ENCODE measurements at regions of chr15 and their contacts with region 1.

Region 1: GRCh38 chr15:39580117-39580484 is 778 bp upstream of the THBS1 start:
- DNase-seq: peak; percentile 95
- ATAC-seq: peak; percentile 38
- H3K4me3 Mint-ChIP-seq: peak overlapping the region; percentile 87
- H3K27ac Mint-ChIP-seq: peak overlapping the region; percentile 99
- H3K4me1 Mint-ChIP-seq: peaks cover 28% of the 10 kb centered on the region
- H3K27me3 Mint-ChIP-seq: peaks cover 16% of the 10 kb centered on the region
- CTCF ChIP-seq: peak; percentile 94

Region 2: GRCh38 chr15:38873167-38873566 is 706.9 kb before region 1 on chr15:
- CTCF ChIA-PET with region 1: interaction called, 13 read pairs
- POLR2A ChIA-PET with region 1: interaction called, 3 read pairs
- DNase-seq: peak; percentile 16
- ATAC-seq: peak; percentile 79
- H3K4me3 Mint-ChIP-seq: no peak overlapping the region
- H3K27ac Mint-ChIP-seq: no peak overlapping the region
- H3K4me1 Mint-ChIP-seq: peaks cover 16% of the 10 kb centered on the region
- H3K27me3 Mint-ChIP-seq: no peaks in the 10 kb centered on the region
- CTCF ChIP-seq: no peak

Region 3: GRCh38 chr15:39171944-39172368 is 408.1 kb before region 1 on chr15:
- CTCF ChIA-PET with region 1: interaction called, 44 read pairs
- POLR2A ChIA-PET with region 1: interaction called, 24 read pairs
- DNase-seq: peak; percentile 63
- ATAC-seq: peak; percentile 96
- H3K4me3 Mint-ChIP-seq: no peak overlapping the region
- H3K27ac Mint-ChIP-seq: peak overlapping the region; percentile 91
- H3K4me1 Mint-ChIP-seq: peaks cover 43% of the 10 kb centered on the region
- H3K27me3 Mint-ChIP-seq: no peaks in the 10 kb centered on the region
- CTCF ChIP-seq: no peak

Region 4: GRCh38 chr15:39213385-39213840 is 366.7 kb before region 1 on chr15:
- CTCF ChIA-PET with region 1: interaction called, 16 read pairs
- POLR2A ChIA-PET with region 1: interaction called, 31 read pairs
- DNase-seq: peak; percentile 89
- ATAC-seq: peak; percentile 98
- H3K4me3 Mint-ChIP-seq: peak overlapping the region; percentile 31; the same call in 1 of the 2 replicates
- H3K27ac Mint-ChIP-seq: peak overlapping the region; percentile 100
- H3K4me1 Mint-ChIP-seq: peaks cover 29% of the 10 kb centered on the region
- H3K27me3 Mint-ChIP-seq: no peaks in the 10 kb centered on the region
- CTCF ChIP-seq: no peak

Region 5: GRCh38 chr15:39312984-39313383 is 267.1 kb before region 1 on chr15:
- CTCF ChIA-PET with region 1: interaction called, 19 read pairs
- POLR2A ChIA-PET with region 1: interaction called, 8 read pairs
- DNase-seq: peak; percentile 19
- ATAC-seq: peak; percentile 92
- H3K4me3 Mint-ChIP-seq: no peak overlapping the region
- H3K27ac Mint-ChIP-seq: no peak overlapping the region
- H3K4me1 Mint-ChIP-seq: peaks cover 7% of the 10 kb centered on the region
- H3K27me3 Mint-ChIP-seq: no peaks in the 10 kb centered on the region
- CTCF ChIP-seq: no peak

Region 6: DNA sequence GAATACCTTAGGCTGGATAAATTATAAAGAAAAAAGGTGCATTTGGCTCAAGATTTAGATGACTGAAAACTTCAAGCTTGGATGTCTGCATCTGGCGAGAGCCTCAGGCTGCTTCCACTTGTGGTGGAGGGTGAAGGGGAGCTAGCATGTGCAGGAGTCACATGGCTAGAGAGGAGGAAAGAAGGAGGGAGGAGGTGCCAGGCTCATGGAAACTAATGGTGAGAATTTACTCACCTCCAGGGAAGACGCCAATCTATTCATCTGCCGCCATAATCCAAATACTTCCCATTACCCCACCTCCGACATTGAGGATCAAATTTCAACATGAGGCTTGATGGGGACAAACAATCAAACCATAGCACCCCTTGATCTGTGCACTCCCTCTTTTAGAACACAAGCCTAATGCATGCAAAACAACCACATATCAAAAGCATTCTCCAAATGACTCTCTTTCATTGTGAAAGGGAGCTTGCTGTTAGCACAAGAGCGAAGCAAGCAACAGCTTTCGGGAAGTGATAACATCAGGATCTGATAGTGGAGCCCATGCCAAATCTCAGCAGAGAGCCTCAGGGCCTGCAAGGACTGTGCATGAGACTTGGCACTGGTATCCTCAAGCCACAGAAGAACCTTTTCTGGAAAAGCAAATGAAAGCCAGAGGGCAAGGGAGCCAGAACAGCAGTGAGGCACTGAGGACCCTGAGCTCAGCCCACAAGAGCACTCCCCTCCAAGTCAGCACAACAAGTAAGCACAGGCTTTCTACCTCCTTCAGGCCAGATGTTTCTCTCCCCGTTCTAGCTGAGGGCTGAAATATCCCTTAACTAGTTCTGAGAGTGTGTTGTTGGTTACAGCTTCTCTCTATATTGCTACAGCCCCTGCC is 49.4 kb before region 1 on chr15:
- CTCF ChIA-PET with region 1: interaction called, 14 read pairs
- POLR2A ChIA-PET with region 1: interaction called, 11 read pairs
- DNase-seq: no peak
- ATAC-seq: peak; percentile 85
- H3K4me3 Mint-ChIP-seq: no peak overlapping the region
- H3K27ac Mint-ChIP-seq: peak overlapping the region; percentile 25; the same call in 1 of the 2 replicates
- H3K4me1 Mint-ChIP-seq: peaks cover 19% of the 10 kb centered on the region
- H3K27me3 Mint-ChIP-seq: peaks cover 19% of the 10 kb centered on the region
- CTCF ChIP-seq: no peak

Region 7: DNA sequence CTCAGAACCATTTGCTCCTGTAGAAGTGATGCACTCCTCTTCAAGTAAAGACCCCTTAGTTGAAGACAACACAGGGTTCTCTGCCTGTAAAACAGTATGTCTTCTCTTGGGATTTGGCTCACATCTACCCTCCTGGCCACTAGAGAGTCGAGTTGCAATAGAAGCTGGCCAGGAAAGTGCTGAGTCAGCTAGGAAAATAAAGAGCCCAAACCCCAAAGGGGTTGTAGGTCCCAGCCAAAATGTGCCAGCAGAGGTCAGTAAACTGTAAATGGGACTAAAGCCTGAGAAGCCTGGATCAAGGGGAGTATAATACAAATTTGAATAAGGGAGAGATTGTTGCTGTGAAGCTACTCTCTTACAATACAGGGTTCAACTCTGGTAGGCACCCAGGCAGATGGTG is 36.5 kb before region 1 on chr15:
- CTCF ChIA-PET with region 1: interaction called, 31 read pairs
- POLR2A ChIA-PET with region 1: interaction called, 8 read pairs
- DNase-seq: peak; percentile 53
- ATAC-seq: peak; percentile 99
- H3K4me3 Mint-ChIP-seq: no peak overlapping the region
- H3K27ac Mint-ChIP-seq: no peak overlapping the region
- H3K4me1 Mint-ChIP-seq: peaks cover 6% of the 10 kb centered on the region; the same call in 1 of the 2 replicates
- H3K27me3 Mint-ChIP-seq: no peaks in the 10 kb centered on the region
- CTCF ChIP-seq: no peak

Region 8: GRCh38 chr15:39565851-39566250 is 14.2 kb before region 1 on chr15:
- CTCF ChIA-PET with region 1: no interaction called
- POLR2A ChIA-PET with region 1: no interaction called
- DNase-seq: no peak
- ATAC-seq: no peak
- H3K4me3 Mint-ChIP-seq: no peak overlapping the region
- H3K27ac Mint-ChIP-seq: no peak overlapping the region
- H3K4me1 Mint-ChIP-seq: no peaks in the 10 kb centered on the region
- H3K27me3 Mint-ChIP-seq: no peaks in the 10 kb centered on the region
- CTCF ChIP-seq: no peak

Region 9: DNA sequence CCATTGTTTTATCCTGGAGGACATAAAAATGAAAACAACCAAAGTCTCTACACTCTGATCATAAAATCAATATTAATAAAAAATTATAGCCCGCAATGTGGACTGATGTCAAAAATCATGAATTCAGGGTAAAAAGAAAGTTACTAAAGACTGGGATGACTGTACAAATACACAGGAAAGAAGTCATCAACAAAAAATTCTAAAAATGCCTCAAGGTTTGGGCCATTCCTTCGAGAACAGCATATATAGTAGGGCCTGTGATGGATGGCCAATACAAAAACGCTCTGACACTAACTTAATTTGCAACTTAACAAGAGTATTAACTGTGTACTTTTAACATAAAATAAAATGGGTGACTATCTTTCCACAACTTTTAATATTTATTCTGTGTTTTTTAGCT is 77.6 kb after region 1 on chr15:
- CTCF ChIA-PET with region 1: no interaction called
- POLR2A ChIA-PET with region 1: no interaction called
- DNase-seq: no peak
- ATAC-seq: no peak
- H3K4me3 Mint-ChIP-seq: no peak overlapping the region
- H3K27ac Mint-ChIP-seq: no peak overlapping the region
- H3K4me1 Mint-ChIP-seq: peaks cover 3% of the 10 kb centered on the region; the same call in 1 of the 2 replicates
- H3K27me3 Mint-ChIP-seq: no peaks in the 10 kb centered on the region
- CTCF ChIP-seq: no peak

Measured in WTC11 (cell line).